B cell (primary cell): ENCODE measurements at regions of chr15 and their contacts with region 1.

Region 1: DNA sequence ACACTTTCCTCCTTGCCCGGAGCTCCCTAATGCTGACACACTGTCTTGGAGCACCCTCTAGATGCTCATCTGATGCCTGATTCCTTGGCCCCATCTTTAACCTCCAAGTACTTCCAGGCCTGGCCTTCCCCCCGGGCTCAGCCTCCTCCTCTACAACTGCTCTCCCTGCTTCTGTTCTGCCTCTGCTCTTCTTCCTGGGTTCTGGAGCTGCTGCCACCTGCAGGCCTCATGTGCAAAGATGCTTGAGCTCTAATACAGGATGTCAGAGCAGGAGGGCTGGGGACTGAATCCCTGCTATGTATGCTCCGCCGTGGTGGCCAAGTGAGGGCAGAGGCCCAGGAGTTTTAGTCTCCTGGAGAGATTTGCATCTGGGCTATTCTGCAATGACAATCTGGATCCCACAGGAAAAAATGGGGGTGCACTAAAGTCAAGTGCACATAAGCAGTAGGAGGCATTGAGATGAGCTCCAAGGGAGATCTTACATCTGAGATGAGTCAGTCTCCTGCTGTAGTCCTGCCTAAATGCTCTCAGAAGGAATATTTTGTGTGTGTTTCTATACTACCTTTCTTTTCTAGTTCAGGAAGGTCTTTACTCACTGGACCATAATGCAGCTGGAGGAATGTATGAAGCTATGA is 296.3 kb downstream of the UACA start:
- DNase-seq: peak; percentile 70
- ATAC-seq: peak; percentile 84
- H3K4me3 ChIP-seq: no peak overlapping the region
- H3K4me3 Mint-ChIP-seq: no peak overlapping the region
- H3K27ac ChIP-seq: no peak overlapping the region
- H3K27ac Mint-ChIP-seq: peak overlapping the region; percentile 3
- H3K4me1 ChIP-seq: peaks cover 11 to 15% of the 10 kb centered on the region in 2 donors
- H3K4me1 Mint-ChIP-seq: peaks cover 21% of the 10 kb centered on the region
- H3K27me3 ChIP-seq: peaks cover 0 to 12% (median under 1%) of the 10 kb centered on the region in 4 experiments
- H3K27me3 Mint-ChIP-seq: peaks cover 9% of the 10 kb centered on the region
- CTCF ChIP-seq: peak; percentile 71

Region 2: GRCh38 chr15:69576035-69576526 is 890.9 kb before region 1 on chr15:
- CTCF ChIA-PET with region 1: interaction called, 45 read pairs
- POLR2A ChIA-PET with region 1: no interaction called
- intact Hi-C with region 1: loop called (anchors 1 kb)
- DNase-seq: peak; percentile 74
- ATAC-seq: peak; percentile 83
- H3K4me3 ChIP-seq: no peak overlapping the region
- H3K4me3 Mint-ChIP-seq: no peak overlapping the region
- H3K27ac ChIP-seq: no peak overlapping the region
- H3K27ac Mint-ChIP-seq: no peak overlapping the region
- H3K4me1 ChIP-seq: peaks cover 5 to 8% of the 10 kb centered on the region in 2 donors
- H3K4me1 Mint-ChIP-seq: peaks cover 11% of the 10 kb centered on the region
- H3K27me3 ChIP-seq: peaks cover 0 to 10% (median under 1%) of the 10 kb centered on the region in 4 experiments
- H3K27me3 Mint-ChIP-seq: peaks cover 18% of the 10 kb centered on the region
- CTCF ChIP-seq: peak; percentile 82

Region 3: GRCh38 chr15:69958494-69959084 is 508.4 kb before region 1 on chr15:
- CTCF ChIA-PET with region 1: no interaction called
- POLR2A ChIA-PET with region 1: no interaction called
- intact Hi-C with region 1: no loop called
- DNase-seq: no peak
- ATAC-seq: no peak
- H3K4me3 ChIP-seq: no peak overlapping the region
- H3K4me3 Mint-ChIP-seq: no peak overlapping the region
- H3K27ac ChIP-seq: no peak overlapping the region
- H3K27ac Mint-ChIP-seq: no peak overlapping the region
- H3K4me1 ChIP-seq: peaks cover 0 to 9% of the 10 kb centered on the region in 2 donors
- H3K4me1 Mint-ChIP-seq: peaks cover 14% of the 10 kb centered on the region
- H3K27me3 ChIP-seq: peaks cover 0 to 7% (median 0%) of the 10 kb centered on the region in 4 experiments
- H3K27me3 Mint-ChIP-seq: peaks cover 8% of the 10 kb centered on the region
- CTCF ChIP-seq: no peak

Region 4: DNA sequence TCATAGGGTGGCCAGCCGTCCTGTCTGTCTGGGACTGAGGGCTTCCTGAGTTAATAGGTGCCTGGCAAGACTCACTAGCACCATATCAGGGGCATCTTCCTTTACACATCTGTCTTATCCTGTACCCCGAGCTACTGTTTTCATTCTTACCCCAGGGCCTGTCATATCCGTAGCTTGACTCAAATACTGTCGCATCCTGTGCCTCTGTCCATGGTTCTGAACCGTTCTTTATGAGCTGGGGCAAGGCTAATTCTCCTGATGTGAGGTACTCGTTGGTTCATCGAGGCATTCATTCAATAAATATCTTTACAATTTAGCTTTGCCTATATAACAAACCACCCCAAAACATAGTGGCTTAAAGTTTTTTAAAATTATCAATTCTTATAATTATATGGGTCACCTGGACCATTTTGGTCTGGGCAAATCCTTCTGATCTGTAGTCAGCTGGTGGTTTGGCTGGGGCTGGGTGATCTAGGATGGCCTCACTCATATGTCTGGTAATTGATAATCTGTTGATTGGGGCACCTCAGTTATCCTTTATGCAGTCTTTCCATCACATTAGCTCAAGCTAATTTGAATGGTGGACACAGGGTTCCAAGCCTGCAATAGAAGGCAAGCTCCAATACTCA is 490.5 kb before region 1 on chr15:
- CTCF ChIA-PET with region 1: no interaction called
- POLR2A ChIA-PET with region 1: no interaction called
- intact Hi-C with region 1: loop called (anchors 10 kb)
- DNase-seq: peak; percentile 75
- ATAC-seq: no peak
- H3K4me3 ChIP-seq: no peak overlapping the region
- H3K4me3 Mint-ChIP-seq: no peak overlapping the region
- H3K27ac ChIP-seq: no peak overlapping the region
- H3K27ac Mint-ChIP-seq: no peak overlapping the region
- H3K4me1 ChIP-seq: peaks cover 24 to 29% of the 10 kb centered on the region in 2 donors
- H3K4me1 Mint-ChIP-seq: peaks cover 30% of the 10 kb centered on the region
- H3K27me3 ChIP-seq: peaks cover 0 to 18% (median 3%) of the 10 kb centered on the region in 4 experiments
- H3K27me3 Mint-ChIP-seq: peaks cover 24% of the 10 kb centered on the region
- CTCF ChIP-seq: no peak

Region 5: DNA sequence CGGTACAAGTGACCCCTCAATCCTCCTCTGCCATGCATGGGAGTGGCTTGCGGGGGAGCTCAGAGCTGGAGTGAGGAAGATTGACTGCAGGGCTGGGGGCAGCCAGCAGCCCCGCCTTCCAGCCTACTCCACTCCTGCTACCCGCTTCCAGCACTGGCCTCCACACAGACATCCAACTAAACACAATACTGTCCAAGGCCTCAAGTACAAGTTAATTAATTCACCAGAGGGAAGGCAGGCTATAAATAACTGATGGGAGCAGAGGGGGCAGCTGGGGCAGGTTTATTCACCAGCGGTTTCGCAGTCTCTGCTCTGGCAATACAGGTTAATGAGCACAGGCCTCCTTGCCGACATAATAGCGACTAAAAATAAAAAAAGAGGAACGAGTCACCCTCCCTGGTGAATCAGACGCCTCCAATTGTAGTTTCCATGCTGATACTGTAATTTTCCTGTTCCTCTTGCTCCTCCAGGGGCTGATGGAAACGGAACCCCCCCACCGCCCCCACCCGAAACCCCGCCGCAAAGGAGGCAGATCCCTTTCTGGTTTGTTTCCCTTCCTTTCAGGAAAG is 202.9 kb before region 1 on chr15:
- CTCF ChIA-PET with region 1: interaction called, 5 read pairs
- POLR2A ChIA-PET with region 1: no interaction called
- intact Hi-C with region 1: loop called (anchors 5 kb)
- DNase-seq: peak; percentile 71
- ATAC-seq: peak; percentile 54
- H3K4me3 ChIP-seq: no peak overlapping the region
- H3K4me3 Mint-ChIP-seq: peak overlapping the region; percentile 55
- H3K27ac ChIP-seq: no peak overlapping the region
- H3K27ac Mint-ChIP-seq: peak overlapping the region; percentile 68
- H3K4me1 ChIP-seq: peaks cover 88 to 96% of the 10 kb centered on the region in 2 donors
- H3K4me1 Mint-ChIP-seq: peaks cover 95% of the 10 kb centered on the region
- H3K27me3 ChIP-seq: peaks cover 0 to 3% (median 0%) of the 10 kb centered on the region in 4 experiments
- H3K27me3 Mint-ChIP-seq: no peaks in the 10 kb centered on the region
- CTCF ChIP-seq: no peak

Region 6: GRCh38 chr15:70605606-70606410 is 138.8 kb after region 1 on chr15:
- CTCF ChIA-PET with region 1: no interaction called
- POLR2A ChIA-PET with region 1: no interaction called
- intact Hi-C with region 1: no loop called
- DNase-seq: no peak
- ATAC-seq: no peak
- H3K4me3 ChIP-seq: no peak overlapping the region
- H3K4me3 Mint-ChIP-seq: no peak overlapping the region
- H3K27ac ChIP-seq: no peak overlapping the region
- H3K27ac Mint-ChIP-seq: no peak overlapping the region
- H3K4me1 ChIP-seq: no peaks in the 10 kb centered on the region
- H3K4me1 Mint-ChIP-seq: no peaks in the 10 kb centered on the region
- H3K27me3 ChIP-seq: peaks cover 0 to 4% (median 0%) of the 10 kb centered on the region in 4 experiments
- H3K27me3 Mint-ChIP-seq: peaks cover 20% of the 10 kb centered on the region
- CTCF ChIP-seq: no peak

Region 7: DNA sequence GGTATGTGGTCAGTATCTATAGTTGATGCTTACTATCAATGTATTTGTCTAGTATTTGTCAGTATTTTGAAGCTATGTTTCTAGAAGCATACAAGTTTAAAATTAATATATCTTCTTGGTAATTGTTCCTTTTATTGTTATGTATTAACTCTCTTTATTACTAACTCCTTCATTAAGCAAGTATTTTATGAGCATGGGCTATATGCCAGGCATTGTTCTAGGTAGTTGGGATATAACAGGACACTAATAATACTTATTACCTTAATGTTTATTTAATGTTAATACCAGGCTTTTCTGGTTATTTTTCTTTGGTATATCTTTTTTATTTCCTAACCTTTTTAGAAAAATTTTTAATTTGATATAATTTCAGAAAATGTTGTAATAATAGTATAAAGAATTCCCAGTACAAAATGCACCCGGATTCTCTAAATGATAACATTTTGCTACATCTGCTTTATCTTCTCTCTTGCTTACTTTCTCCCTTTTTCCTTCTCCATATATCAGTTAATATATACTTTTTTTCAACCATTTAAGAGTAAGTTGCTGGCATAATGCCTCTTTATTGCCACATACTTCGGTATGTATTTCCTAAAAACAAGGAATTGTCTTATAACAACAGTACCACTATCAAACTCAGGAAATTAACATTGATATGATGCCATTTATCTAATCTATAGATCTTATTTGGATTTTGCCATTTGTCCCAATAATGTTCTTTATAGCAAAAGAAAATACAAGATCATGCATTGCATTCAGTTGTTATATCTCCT is 456.5 kb after region 1 on chr15:
- CTCF ChIA-PET with region 1: no interaction called
- POLR2A ChIA-PET with region 1: no interaction called
- intact Hi-C with region 1: no loop called
- DNase-seq: no peak
- ATAC-seq: no peak
- H3K4me3 ChIP-seq: no peak overlapping the region
- H3K4me3 Mint-ChIP-seq: no peak overlapping the region
- H3K27ac ChIP-seq: no peak overlapping the region
- H3K27ac Mint-ChIP-seq: no peak overlapping the region
- H3K4me1 ChIP-seq: no peaks in the 10 kb centered on the region
- H3K4me1 Mint-ChIP-seq: no peaks in the 10 kb centered on the region
- H3K27me3 ChIP-seq: no peaks in the 10 kb centered on the region
- H3K27me3 Mint-ChIP-seq: peaks cover 21% of the 10 kb centered on the region
- CTCF ChIP-seq: no peak

Region 8: GRCh38 chr15:70955151-70955550 is 488.1 kb after region 1 on chr15:
- CTCF ChIA-PET with region 1: no interaction called
- POLR2A ChIA-PET with region 1: no interaction called
- intact Hi-C with region 1: no loop called
- DNase-seq: no peak
- ATAC-seq: no peak
- H3K4me3 ChIP-seq: no peak overlapping the region
- H3K4me3 Mint-ChIP-seq: no peak overlapping the region
- H3K27ac ChIP-seq: no peak overlapping the region
- H3K27ac Mint-ChIP-seq: no peak overlapping the region
- H3K4me1 ChIP-seq: no peaks in the 10 kb centered on the region
- H3K4me1 Mint-ChIP-seq: no peaks in the 10 kb centered on the region
- H3K27me3 ChIP-seq: peaks cover 0 to 9% (median 4%) of the 10 kb centered on the region in 4 experiments
- H3K27me3 Mint-ChIP-seq: peaks cover 29% of the 10 kb centered on the region
- CTCF ChIP-seq: no peak